ENCODE measurements at regions of chr12 and their contacts with region 1.

Region 1: DNA sequence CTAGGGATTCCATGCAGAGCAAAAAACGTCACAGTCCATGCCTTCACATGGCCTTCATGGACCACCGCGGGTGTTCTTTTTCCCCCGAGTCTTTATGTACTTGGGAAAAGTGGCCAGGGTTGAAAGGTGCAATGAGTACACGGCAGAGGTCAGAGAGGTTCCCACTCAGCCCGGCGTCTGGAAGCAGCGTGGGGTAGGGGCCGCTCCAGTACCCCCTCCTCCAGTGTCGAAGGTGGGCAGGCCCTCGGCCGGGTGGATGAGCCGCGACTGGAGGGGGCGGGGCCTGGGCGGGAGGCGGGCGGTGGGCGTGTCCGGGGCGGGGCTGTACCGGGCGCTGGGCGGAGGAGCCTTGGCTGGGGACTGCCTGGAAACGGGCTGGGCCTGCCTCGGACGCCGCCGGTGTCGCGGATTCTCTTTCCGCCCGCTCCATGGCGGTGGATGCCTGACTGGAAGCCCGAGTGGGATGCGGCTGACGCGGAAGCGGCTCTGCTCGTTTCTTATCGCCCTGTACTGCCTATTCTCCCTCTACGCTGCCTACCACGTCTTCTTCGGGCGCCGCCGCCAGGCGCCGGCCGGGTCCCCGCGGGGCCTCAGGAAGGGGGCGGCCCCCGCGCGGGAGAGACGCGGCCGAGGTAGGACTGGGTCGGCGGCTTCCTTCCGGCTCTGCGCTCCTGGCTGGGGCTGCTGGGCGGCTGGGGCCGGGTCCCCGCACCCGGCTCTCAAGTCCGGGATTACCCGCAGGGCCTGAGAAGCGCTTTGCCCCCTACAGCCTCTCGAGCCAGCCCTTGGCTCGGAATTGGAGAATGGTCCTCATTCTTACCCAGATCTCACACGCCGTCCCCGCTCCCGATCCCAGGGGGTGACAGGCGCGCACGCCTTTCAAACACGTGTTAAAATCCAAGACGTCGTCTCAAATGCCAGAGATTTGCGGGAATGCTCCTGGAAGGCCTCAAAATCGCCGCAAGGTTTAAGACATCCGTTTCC is at the start of gene RXYLT1:
- DNase-seq: peak; percentile 85
- H3K4me3 Mint-ChIP-seq: peak within 1 kb of the TSS; percentile 98
- H3K27ac Mint-ChIP-seq: peak within 1 kb of the TSS; percentile 91
- H3K4me1 Mint-ChIP-seq: peaks cover 18% of the 10 kb centered on the region
- H3K27me3 Mint-ChIP-seq: no peaks in the 10 kb centered on the region
- total RNA-seq, gene RXYLT1: 9.8 to 12.7 TPM

Region 2: DNA sequence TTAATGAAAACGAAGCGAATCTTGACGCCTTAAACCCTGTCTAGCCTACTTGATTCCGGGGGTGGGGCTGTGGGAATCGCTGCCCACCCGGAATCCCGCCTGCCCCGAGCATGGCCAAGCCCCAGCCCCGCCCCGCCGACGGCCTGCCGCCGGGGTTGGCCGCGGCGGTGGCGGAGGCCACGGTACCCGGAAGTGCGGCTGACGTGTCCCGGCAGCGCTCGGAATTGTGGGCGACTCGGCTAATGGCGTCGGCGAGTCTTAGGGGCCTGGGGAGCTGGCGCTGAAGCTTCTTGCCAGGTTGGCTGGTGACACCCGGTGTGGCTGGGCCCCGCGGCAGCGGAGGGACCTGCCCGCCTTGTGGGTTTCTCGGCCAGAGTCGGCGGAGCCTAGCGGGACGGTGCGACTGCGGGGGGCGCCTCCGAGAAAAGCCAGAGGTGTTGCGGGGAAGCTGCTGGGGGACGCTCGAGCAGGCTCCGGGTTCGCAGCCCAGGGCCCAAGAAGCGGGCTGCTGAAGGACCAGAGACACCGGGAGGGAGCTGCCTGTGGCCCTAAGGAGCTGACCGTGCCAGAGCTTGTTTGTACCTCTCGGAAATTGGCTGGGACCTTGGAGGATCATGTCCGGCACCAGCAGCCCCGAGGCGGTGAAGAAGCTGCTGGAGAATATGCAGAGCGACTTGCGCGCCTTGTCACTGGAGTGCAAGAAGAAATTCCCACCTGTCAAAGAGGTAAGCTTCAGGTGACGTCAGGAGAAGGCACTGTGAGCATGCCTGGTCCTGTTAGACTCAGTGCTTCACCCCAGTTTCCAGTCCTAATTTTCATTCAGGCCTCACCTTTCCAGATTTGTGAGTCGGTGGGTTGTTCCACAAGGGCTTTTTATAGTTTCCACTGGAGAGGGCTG is 1312.9 kb before region 1 on chr12 and contains the start of gene MON2:
- CTCF ChIA-PET with region 1: no interaction called
- intact Hi-C with region 1: loop called (anchors 1 kb)
- DNase-seq: peak; percentile 87
- H3K4me3 Mint-ChIP-seq: peak within 1 kb of the TSS; percentile 74
- H3K27ac Mint-ChIP-seq: peak within 1 kb of the TSS; percentile 88
- H3K4me1 Mint-ChIP-seq: peaks cover 15% of the 10 kb centered on the region
- H3K27me3 Mint-ChIP-seq: no peaks in the 10 kb centered on the region
- total RNA-seq, gene MON2: 29.2 to 29.8 TPM

Region 3: GRCh38 chr12:63439774-63440447 is 339.9 kb before region 1 on chr12:
- CTCF ChIA-PET with region 1: no interaction called
- intact Hi-C with region 1: no loop called
- DNase-seq: no peak
- H3K4me3 Mint-ChIP-seq: no peak overlapping the region
- H3K27ac Mint-ChIP-seq: no peak overlapping the region
- H3K4me1 Mint-ChIP-seq: no peaks in the 10 kb centered on the region
- H3K27me3 Mint-ChIP-seq: no peaks in the 10 kb centered on the region

Region 4: DNA sequence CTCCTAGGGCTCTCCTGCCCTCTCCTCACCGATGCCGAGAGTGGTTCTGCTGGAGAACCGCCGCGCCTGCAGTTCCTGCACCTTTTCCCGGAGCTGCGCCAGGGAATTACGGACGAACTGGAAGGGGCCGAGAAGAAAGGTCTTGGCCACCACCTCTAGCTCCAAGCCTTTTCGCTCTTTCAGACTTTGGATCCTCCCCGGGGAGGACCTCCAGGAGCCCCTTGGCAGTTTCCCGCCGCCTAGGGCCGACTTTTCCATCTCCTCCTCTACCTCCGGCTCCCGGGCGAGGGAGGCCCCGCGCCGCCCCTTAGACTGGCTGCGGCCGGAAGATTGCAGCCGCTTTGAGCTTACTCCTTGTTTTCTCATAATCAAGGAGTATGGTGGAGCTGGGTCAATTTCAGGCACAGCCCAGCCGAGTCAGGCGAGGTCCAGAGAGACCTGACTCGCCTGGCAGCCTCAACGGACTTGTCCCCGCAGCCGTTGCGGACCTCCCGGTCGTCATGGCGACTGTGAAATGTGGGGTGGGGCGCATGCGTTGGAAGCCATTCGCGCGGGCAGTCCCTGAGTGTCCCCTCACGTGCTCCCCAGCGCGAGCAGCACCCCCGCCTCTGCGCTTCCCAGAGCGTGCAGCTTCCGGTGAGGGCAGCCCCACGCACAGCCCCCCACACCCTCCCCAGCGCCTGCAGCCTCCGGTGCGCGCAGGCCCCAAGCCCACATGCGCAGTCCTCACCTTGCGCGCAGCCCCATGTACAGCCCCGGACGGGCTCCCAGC is 111.6 kb before region 1 on chr12 and contains the start of gene DPY19L2:
- CTCF ChIA-PET with region 1: no interaction called
- intact Hi-C with region 1: loop called (anchors 1 kb)
- DNase-seq: peak; percentile 69
- H3K4me3 Mint-ChIP-seq: peak within 1 kb of the TSS; percentile 79
- H3K27ac Mint-ChIP-seq: peak within 1 kb of the TSS; percentile 36
- H3K4me1 Mint-ChIP-seq: peaks cover 10% of the 10 kb centered on the region
- H3K27me3 Mint-ChIP-seq: peaks cover 29% of the 10 kb centered on the region
- total RNA-seq, gene DPY19L2: 0.91 to 1.1 TPM

Region 5: GRCh38 chr12:64222009-64222765 is 442.4 kb after region 1 on chr12 and contains the start of gene KICS2:
- CTCF ChIA-PET with region 1: no interaction called
- intact Hi-C with region 1: loop called (anchors 1 kb)
- DNase-seq: peak; percentile 92
- H3K4me3 Mint-ChIP-seq: peak within 1 kb of the TSS; percentile 92
- H3K27ac Mint-ChIP-seq: peak within 1 kb of the TSS; percentile 91
- H3K4me1 Mint-ChIP-seq: peaks cover 26% of the 10 kb centered on the region
- H3K27me3 Mint-ChIP-seq: no peaks in the 10 kb centered on the region
- total RNA-seq, gene KICS2: 13.3 to 15.6 TPM

Region 6: DNA sequence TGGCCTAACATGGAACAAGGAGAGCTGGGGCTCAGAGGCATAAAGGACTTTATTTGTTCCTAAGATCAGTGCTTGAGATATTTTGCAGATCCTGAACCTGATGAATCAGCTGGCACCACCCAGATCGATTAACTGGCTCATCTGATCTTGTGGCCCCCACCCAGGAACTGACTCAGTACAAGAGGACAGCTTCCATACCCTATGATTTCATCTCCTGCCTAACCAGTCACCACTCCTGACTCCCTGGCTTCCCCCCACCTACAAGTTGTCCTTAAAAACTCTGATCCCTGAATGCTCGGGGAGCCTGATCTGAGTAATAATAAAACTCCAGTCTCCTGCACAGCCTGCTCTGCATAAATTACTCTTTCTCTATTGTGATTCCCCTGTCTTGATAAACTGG is 605.7 kb after region 1 on chr12:
- CTCF ChIA-PET with region 1: no interaction called
- intact Hi-C with region 1: loop called (anchors 5 kb)
- DNase-seq: peak; percentile 67
- H3K4me3 Mint-ChIP-seq: peak overlapping the region; percentile 11
- H3K27ac Mint-ChIP-seq: peak overlapping the region; percentile 10
- H3K4me1 Mint-ChIP-seq: peaks cover 24% of the 10 kb centered on the region
- H3K27me3 Mint-ChIP-seq: no peaks in the 10 kb centered on the region